ENCODE measurements at regions of chr10 and their contacts with region 1.

Region 1: GRCh38 chr10:35517431-35518181 is 87.5 kb upstream of the GJD4 start:
- DNase-seq: peak; percentile 34
- ATAC-seq: peak; percentile 29; the same call in 1 of the 2 replicates
- H3K4me3 ChIP-seq: no peak overlapping the region
- H3K27ac ChIP-seq: no peak overlapping the region
- H3K4me1 ChIP-seq: peaks cover 6% of the 10 kb centered on the region
- H3K27me3 ChIP-seq: no peaks in the 10 kb centered on the region
- CTCF ChIP-seq: no peak

Region 2: GRCh38 chr10:34446049-34446448 is 1071.6 kb before region 1 on chr10:
- CTCF ChIA-PET with region 1: no interaction called
- POLR2A ChIA-PET with region 1: no interaction called
- intact Hi-C with region 1: no loop called
- DNase-seq: no peak
- ATAC-seq: peak; percentile 24; the same call in 1 of the 2 replicates
- H3K4me3 ChIP-seq: no peak overlapping the region
- H3K27ac ChIP-seq: no peak overlapping the region
- H3K4me1 ChIP-seq: no peaks in the 10 kb centered on the region
- H3K27me3 ChIP-seq: no peaks in the 10 kb centered on the region
- CTCF ChIP-seq: no peak

Region 3: DNA sequence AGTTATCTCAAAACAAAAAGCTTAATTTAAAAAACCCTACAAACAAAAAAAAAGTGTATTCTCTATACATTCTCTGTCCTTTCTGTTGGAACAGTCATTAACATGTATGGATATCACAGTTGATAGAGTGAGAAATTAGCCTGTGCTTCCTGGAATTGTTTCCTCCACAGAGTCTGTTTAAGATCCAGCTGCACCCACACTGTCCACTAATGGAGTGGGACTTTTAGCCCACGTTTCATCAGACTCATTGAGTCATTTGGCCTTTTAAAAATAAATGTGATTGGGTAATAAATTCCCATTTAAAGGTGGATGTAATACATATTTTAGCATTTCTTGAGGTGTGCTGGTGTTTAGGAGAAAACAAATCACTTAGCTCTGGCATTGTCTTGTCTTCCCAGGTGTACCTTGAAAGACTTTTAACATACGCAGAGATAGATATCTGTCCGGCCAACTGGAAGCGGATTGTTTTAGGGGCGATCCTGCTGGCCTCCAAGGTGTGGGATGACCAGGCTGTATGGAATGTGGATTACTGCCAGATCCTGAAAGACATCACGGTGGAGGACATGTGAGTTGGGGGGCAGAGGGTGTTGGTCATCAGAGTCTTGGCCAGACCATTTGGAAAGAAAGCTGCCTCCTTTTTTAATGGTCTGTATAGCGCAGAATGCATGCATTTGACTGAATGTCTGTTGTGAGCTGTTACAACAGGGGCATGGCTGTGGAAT is 35.2 kb after region 1 on chr10:
- CTCF ChIA-PET with region 1: interaction called, 12 read pairs
- POLR2A ChIA-PET with region 1: no interaction called
- intact Hi-C with region 1: no loop called
- DNase-seq: peak; percentile 76
- ATAC-seq: peak; percentile 32
- H3K4me3 ChIP-seq: no peak overlapping the region
- H3K27ac ChIP-seq: no peak overlapping the region
- H3K4me1 ChIP-seq: peaks cover 30% of the 10 kb centered on the region
- H3K27me3 ChIP-seq: no peaks in the 10 kb centered on the region
- CTCF ChIP-seq: no peak

Measured in PC-3 (cell line).